Activated CD4-positive, alpha-beta memory T cell treated with anti-CD3 and anti-CD28 coated beads for 36 hours (primary cell): ENCODE measurements at regions of chr2 and their contacts with region 1.

Region 1: GRCh38 chr2:136423516-136423996 is 305.6 kb upstream of the CXCR4 start:
- DNase-seq: peak; percentile 89
- H3K4me3 Mint-ChIP-seq: peak overlapping the region; percentile 73
- H3K27ac Mint-ChIP-seq: no peak overlapping the region
- H3K4me1 Mint-ChIP-seq: peaks cover 18% of the 10 kb centered on the region
- H3K27me3 Mint-ChIP-seq: peaks cover 31% of the 10 kb centered on the region

Region 2: GRCh38 chr2:135913727-135914365 is 509.7 kb before region 1 on chr2:
- CTCF ChIA-PET with region 1: interaction called, 10 read pairs
- POLR2A ChIA-PET with region 1: no interaction called
- intact Hi-C with region 1: no loop called
- DNase-seq: no peak
- H3K4me3 Mint-ChIP-seq: no peak overlapping the region
- H3K27ac Mint-ChIP-seq: no peak overlapping the region
- H3K4me1 Mint-ChIP-seq: peaks cover 14% of the 10 kb centered on the region
- H3K27me3 Mint-ChIP-seq: no peaks in the 10 kb centered on the region

Region 3: DNA sequence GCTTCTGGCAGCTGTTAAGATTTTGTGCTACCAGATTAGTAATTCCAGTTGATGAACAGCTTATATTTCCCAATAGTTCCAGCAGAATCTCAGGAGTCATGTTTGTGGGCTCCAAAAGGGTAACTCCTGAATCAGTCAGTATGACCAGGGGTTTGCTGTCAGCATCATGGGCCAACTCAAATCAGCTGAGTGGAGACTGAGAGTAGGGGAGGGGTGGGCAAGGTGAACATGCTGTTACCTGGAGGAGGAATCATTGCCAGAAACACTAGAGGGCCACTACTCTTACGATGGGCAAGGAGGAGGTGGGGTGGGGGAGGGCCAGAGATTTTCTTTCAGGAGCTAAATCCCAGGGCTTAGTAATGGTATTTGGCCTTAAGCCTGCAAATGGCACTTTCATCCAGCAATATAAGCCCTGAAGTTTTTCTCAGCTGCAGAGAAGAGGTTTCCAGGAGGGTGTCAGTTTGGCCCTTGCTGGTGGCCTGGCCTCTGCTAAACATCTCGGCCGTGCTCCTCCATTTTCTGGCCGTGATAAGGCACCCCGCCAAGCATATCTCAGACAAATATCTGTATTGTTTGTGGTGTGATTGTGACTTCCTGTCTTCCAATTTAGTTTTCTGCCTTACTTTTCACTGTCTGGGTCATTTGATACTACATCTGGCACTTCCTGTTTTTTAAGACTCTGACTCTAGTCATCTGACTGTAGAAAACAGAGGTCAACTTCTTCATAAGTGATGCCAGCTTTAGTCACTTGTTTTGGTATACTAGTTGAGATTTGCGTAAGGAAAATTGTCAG is 185.1 kb before region 1 on chr2:
- CTCF ChIA-PET with region 1: no interaction called
- POLR2A ChIA-PET with region 1: no interaction called
- intact Hi-C with region 1: no loop called
- DNase-seq: peak; percentile 61
- H3K4me3 Mint-ChIP-seq: no peak overlapping the region
- H3K27ac Mint-ChIP-seq: peak overlapping the region; percentile 93
- H3K4me1 Mint-ChIP-seq: peaks cover 64% of the 10 kb centered on the region
- H3K27me3 Mint-ChIP-seq: no peaks in the 10 kb centered on the region

Region 4: GRCh38 chr2:136665736-136666135 is 242.2 kb after region 1 on chr2:
- CTCF ChIA-PET with region 1: no interaction called
- POLR2A ChIA-PET with region 1: no interaction called
- intact Hi-C with region 1: loop called (anchors 10 kb)
- DNase-seq: no peak
- H3K4me3 Mint-ChIP-seq: no peak overlapping the region
- H3K27ac Mint-ChIP-seq: no peak overlapping the region
- H3K4me1 Mint-ChIP-seq: no peaks in the 10 kb centered on the region
- H3K27me3 Mint-ChIP-seq: peaks cover 3% of the 10 kb centered on the region

Region 5: DNA sequence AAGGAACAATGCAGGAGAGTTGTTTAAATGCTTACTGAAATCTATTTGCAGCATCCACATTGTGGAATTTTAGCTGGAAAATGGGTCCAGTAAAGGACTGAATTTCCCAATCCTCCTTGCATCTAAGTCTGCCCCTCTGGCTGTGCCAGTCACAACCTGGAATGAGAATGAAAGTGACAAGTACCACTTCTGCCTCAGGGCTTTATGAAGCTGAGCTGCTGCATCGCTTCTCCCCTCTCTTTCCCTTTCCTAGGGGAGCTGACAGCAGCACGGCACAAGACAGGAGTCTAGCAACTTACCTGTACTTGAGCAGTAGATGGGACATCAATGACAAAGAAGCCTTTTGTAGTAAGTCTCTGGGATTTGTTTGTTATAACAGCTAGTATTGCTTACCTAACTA is 314.5 kb after region 1 on chr2:
- CTCF ChIA-PET with region 1: interaction called, 8 read pairs
- POLR2A ChIA-PET with region 1: no interaction called
- intact Hi-C with region 1: loop called (anchors 5 kb)
- DNase-seq: no peak
- H3K4me3 Mint-ChIP-seq: no peak overlapping the region
- H3K27ac Mint-ChIP-seq: no peak overlapping the region
- H3K4me1 Mint-ChIP-seq: no peaks in the 10 kb centered on the region
- H3K27me3 Mint-ChIP-seq: peaks cover 5% of the 10 kb centered on the region

Region 6: DNA sequence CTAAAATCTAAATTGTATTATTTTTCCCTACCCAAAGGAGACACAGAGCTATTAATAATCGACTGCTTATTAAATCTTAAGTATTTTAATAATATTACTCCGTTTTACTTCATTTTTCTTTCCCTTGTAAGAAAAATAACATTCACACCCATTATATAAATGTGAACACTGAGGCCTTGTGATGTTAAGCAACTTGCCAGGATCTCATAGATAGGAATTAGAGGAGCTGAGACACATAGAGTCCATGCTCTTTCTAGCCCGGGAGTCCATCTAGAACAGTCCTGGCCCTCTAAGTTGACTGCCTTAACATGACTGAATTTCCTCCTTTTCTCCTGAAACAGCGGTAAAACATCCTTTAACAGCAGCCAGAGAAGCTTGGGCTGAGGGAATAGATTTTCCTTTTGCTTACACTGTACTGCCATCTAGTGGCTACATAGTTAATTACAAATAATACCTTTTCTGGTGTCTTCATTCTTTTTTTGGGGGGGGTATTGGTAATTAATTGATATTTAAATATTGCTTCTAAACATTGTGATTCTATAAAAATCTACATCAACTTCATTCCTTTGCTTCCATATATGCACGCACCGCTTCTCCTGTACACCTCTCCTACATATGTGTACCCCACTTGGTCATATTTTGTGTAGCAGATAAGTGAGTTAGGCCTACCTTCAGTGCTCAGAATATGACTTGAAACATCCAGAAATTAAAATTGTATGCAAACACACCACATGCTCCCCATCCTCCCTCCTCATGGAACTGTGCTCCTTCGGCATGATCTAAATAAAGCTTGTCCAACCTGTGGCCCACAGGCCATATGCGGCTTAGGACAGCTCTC is 1414.9 kb after region 1 on chr2:
- CTCF ChIA-PET with region 1: interaction called, 12 read pairs
- POLR2A ChIA-PET with region 1: no interaction called
- intact Hi-C with region 1: loop called (anchors 1 kb)
- DNase-seq: no peak
- H3K4me3 Mint-ChIP-seq: no peak overlapping the region
- H3K27ac Mint-ChIP-seq: no peak overlapping the region
- H3K4me1 Mint-ChIP-seq: no peaks in the 10 kb centered on the region
- H3K27me3 Mint-ChIP-seq: peaks cover 4% of the 10 kb centered on the region